IMR-90 (cell line): ENCODE measurements at regions of chr1 and their contacts with region 1.

Region 1: DNA sequence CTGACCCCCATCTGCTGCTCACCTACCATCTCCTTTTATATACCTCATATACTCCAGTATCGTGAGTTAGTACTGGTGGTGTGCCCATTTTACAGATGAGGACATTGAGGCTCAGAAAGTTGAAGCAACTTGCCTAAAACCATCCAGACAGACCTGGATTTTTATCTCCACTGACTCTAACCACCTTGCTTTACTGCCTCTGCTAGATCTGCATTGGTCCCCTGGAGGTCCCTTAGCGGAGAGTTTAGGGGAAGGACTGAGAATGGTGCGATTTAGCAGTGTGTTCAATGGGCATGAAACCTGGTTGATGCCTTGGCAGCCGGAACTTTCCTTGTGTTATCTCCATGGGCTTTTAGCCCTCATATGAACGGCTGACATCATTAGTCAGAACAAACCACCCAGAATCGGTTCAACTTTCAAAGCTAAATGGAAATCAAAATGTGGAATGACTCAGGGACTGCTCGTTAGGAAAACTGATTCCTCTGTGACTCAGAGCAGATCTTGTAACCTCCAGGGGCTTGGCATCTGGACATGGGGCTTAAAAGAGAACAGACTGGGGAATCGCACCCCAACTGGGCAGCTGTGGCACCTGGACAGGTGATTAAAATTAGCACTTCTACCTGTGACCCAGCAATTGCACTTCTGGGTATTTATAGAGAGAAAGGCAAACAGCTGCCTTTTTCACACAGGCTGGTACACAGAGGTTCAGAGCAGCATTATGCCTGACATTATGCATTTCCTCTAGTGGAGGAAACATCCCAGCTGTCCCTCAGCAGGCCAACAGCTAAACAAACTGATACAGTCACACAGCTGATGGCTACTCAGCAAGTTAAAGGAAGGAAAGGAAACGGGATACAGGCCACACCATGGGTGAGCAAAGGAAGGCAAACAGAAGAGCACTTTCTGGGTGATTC is 25.3 kb downstream of the TMEM51 start:
- DNase-seq: peak; percentile 97
- ATAC-seq: peak; percentile 88
- H3K4me3 ChIP-seq: no peak overlapping the region
- H3K27ac ChIP-seq: peak overlapping the region; percentile 81
- H3K4me1 ChIP-seq: peaks cover 43% of the 10 kb centered on the region
- H3K27me3 ChIP-seq: no peaks in the 10 kb centered on the region
- CTCF ChIP-seq: no peak
- POLR2A ChIP-seq: peak; percentile 45; the same call in 1 of the 2 replicates
- RAD21 ChIP-seq: peak; percentile 23

Region 2: GRCh38 chr1:15033264-15033663 is 145.6 kb before region 1 on chr1:
- CTCF ChIA-PET with region 1: no interaction called
- POLR2A ChIA-PET with region 1: no interaction called
- dilution Hi-C with region 1: no loop called
- in situ Hi-C with region 1: no loop called
- intact Hi-C with region 1: no loop called
- DNase-seq: peak; percentile 87
- ATAC-seq: peak; percentile 42
- H3K4me3 ChIP-seq: no peak overlapping the region
- H3K27ac ChIP-seq: no peak overlapping the region
- H3K4me1 ChIP-seq: peaks cover 13% of the 10 kb centered on the region
- H3K27me3 ChIP-seq: no peaks in the 10 kb centered on the region
- CTCF ChIP-seq: peak; percentile 58
- POLR2A ChIP-seq: no peak
- RAD21 ChIP-seq: no peak; the same call in 1 of the 2 replicates

Region 3: DNA sequence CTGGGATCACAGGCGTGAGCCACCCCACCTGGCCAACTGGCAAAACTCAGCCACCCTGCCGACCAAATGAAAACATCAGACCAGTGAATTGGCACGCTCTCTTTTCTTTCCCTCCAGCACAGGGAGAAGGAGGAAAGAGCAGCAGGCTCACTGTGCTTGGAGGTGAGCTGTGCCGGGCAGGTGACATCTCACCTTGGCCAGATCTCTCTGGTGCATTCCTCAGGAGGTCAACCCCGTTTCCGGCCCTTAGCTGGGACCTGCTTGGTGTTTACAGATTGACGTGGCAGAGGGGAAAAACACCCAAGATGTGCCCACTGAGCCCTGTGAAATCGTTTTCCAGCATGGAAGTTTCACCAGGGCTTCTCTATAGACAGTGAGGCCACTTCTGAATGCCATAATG is 19.9 kb after region 1 on chr1:
- CTCF ChIA-PET with region 1: no interaction called
- POLR2A ChIA-PET with region 1: interaction called, 10 read pairs
- dilution Hi-C with region 1: no loop called
- in situ Hi-C with region 1: no loop called
- intact Hi-C with region 1: no loop called
- DNase-seq: no peak
- ATAC-seq: no peak
- H3K4me3 ChIP-seq: no peak overlapping the region
- H3K27ac ChIP-seq: no peak overlapping the region
- H3K4me1 ChIP-seq: peaks cover 21% of the 10 kb centered on the region
- H3K27me3 ChIP-seq: no peaks in the 10 kb centered on the region
- CTCF ChIP-seq: no peak
- POLR2A ChIP-seq: no peak
- RAD21 ChIP-seq: no peak

Region 4: DNA sequence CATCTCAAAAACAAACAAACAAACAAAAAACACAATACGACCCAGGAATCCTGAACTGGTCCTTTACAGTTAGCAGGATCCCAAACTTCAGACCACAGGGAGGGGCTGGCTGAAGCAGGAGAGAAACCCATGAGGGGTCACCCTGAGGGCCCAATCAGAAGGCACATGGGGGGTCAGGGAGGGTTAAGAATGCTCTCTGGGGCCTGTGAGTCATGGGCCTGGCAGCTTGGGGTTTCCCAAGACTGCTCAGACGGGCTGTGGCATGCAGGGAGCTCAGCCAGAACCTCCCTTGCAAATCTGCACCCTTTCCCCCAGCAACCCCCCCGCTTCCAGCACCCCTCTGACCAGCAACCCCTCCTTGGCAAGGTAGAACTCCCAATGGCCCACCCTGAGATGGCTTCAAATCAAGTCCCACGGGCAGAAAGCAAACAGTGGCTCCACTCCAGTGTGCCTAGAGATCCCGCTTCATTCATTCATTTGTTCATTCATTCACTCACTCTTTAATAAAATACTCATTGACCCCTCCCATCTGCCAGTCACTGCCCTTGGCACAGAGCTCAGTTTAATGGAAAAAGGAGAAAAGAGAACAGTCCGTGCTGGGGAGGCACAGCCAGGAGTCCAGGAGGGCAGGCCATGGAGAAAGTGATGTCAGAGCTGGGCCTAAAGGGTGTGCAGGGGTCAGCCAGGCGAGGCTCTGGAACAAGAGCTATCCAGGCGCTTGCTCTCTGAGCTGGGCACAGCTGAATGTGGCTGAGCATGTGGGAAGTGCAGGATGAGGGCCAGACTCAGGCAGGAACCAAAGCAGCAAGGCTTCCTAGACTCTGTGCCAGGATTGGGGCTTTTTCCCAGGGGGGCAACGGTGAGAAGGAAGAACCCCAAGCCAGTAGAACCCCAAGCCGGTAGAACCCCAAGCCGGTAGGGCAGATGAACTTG is 620.4 kb after region 1 on chr1:
- CTCF ChIA-PET with region 1: no interaction called
- POLR2A ChIA-PET with region 1: no interaction called
- dilution Hi-C with region 1: no loop called
- in situ Hi-C with region 1: no loop called
- intact Hi-C with region 1: no loop called
- DNase-seq: peak; percentile 96
- ATAC-seq: peak; percentile 86
- H3K4me3 ChIP-seq: no peak overlapping the region
- H3K27ac ChIP-seq: peak overlapping the region; percentile 81
- H3K4me1 ChIP-seq: peaks cover 43% of the 10 kb centered on the region
- H3K27me3 ChIP-seq: no peaks in the 10 kb centered on the region
- CTCF ChIP-seq: no peak
- POLR2A ChIP-seq: no peak
- RAD21 ChIP-seq: no peak